Cardiac septum (tissue), 1 donor: ENCODE measurements at regions of chr13 and their contacts with region 1.

Region 1: DNA sequence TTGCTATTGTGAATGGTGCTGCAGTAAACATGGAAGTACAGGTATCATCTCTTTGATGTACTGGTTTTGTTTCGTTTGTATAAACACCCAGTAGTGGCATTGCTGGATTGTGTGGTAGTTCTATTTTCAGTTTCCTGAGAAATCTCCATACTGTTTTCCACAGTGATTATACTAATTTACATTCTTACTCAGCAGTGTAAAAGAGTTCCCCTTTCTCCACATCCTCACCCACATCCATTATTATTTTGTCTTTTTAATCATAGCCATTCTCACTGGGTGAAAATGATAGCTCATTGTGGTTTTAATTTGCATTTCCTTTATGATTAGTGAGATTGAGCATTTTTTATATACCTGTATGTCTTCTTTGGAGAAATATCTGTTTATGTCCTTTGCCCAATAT is 62.3 kb upstream of the PARP4 start:
- DNase-seq: no peak

Region 2: DNA sequence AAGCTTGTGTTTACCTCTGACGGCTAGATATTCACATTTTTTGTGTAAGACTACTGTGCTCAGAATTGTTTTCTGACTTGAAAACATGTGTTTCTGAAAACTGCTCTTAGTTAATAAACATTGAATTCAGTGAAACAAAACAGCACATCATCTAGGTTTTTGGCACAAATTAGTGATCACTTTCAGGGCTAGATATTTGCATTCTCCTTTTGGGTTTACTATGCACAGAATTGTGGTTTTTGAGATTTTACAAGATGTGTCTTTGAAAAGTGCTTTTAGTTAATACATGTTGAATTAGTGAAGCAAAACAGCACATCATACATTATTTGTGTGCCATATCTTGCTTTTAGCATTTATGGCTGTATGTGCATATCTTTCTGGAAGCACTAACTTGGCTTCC is 54.1 kb before region 1 on chr13:
- intact Hi-C with region 1: no loop called
- DNase-seq: no peak

Region 3: GRCh38 chr13:24734950-24735349 is 160.1 kb after region 1 on chr13:
- intact Hi-C with region 1: loop called (anchors 5 kb)
- DNase-seq: no peak

Region 4: GRCh38 chr13:24747248-24748060 is 172.6 kb after region 1 on chr13:
- intact Hi-C with region 1: no loop called
- DNase-seq: no peak

Region 5: DNA sequence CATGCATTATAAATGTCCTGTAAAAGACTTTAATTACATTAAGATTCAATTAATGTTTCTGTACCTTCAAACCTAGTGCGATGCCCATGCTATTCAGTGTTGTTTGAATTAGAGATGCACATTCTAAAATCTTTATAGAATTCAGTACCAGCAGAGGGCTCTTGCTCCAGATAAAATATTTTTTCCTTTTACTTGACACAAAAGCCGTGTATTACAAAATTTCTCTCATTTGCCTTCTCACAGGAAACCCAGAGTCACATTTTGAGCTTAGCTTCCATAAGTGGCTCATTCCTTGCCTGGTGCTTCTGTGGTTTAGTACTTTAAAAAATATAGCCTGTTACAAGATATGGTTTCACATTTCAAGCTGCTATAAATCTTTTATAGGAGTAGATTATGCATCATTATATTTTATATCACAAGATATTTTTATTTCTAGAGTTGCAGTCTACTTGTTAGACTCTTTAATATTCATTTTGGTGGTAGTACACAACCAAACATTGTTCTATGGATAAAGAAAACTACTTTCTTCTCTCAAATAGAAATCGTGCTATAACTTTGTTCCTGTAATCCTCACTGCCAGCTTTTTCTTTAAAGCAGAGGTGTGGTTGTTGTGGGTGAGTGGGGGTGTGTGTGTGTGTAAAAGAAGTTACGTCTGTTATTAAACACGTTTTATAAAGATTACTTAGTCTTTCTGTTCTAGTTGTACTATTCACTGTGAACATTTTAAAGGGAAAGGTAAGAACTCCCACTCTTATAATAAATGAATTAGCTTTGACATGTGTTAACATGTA is 290.5 kb after region 1 on chr13:
- intact Hi-C with region 1: no loop called
- DNase-seq: no peak

Region 6: GRCh38 chr13:25301347-25302047 is 726.6 kb after region 1 on chr13 and contains the start of gene NUP58:
- intact Hi-C with region 1: no loop called
- DNase-seq: peak; percentile 99
- total RNA-seq, gene NUP58: 28.9 TPM